ENCODE measurements at regions of chr19 and their contacts with region 1.

Region 1: DNA sequence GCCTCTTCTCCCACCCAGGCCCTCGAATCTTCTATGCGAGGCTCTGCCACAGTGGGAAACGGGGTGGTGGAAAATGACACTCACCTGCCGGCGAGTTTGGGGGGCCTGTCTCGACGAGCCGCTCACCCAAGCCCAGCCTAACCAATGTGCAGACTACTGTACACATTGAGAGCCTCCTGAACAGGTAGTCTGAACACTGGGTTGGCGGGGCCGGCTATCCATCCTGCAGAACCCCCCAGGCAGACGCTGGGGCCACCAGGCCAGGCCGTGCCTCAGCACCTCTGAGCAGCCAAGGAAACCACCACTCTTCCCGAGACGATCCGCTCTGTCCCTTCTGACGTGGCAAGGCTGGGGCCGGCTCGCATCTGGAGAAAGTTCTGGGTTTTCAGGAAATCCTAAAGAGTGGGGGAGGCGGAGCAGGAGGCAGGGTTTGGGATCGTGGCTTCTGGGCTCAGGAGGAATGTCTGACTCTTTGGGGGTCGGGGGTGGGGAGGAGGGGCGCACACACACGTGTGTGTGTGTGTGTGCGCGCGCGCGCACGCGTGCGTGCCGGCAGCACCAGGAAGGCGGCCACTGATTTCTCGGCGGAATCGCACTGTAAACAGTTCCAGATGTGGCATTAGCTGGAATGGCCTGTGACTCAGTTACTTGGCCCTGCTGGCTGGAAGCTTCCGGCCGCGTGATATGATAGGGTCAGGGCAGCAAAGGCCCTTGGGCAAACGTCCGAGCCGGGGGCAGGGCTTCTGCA is 18.5 kb downstream of the TMED1 start:
- DNase-seq: peak; percentile 51
- H3K4me3 ChIP-seq: peak overlapping the region in 3 of 4 donors; percentile 17 to 35 (median 21)
- H3K27ac ChIP-seq: peak overlapping the region; percentile 64 to 87 (median 78)
- H3K4me1 ChIP-seq: peaks cover 0 to 12% (median 2%) of the 10 kb centered on the region in 4 donors
- H3K27me3 ChIP-seq: no peaks in the 10 kb centered on the region
- CTCF ChIP-seq: no peak
- EP300 ChIP-seq: no peak
- POLR2A ChIP-seq: no peak

Region 2: GRCh38 chr19:10769533-10770491 is 47.7 kb before region 1 on chr19:
- in situ Hi-C with region 1: no loop called
- intact Hi-C with region 1: no loop called
- DNase-seq: peak; percentile 31
- H3K4me3 ChIP-seq: no peak overlapping the region
- H3K27ac ChIP-seq: peak overlapping the region; percentile 50 to 83 (median 72)
- H3K4me1 ChIP-seq: peaks cover 31 to 61% (median 49%) of the 10 kb centered on the region in 4 donors
- H3K27me3 ChIP-seq: no peaks in the 10 kb centered on the region
- CTCF ChIP-seq: peak; percentile 17 to 65 (median 30)
- EP300 ChIP-seq: no peak
- POLR2A ChIP-seq: no peak

Region 3: GRCh38 chr19:11242864-11243797 is 425.7 kb after region 1 on chr19:
- in situ Hi-C with region 1: no loop called
- intact Hi-C with region 1: loop called (anchors 5 kb)
- DNase-seq: peak; percentile 92
- H3K4me3 ChIP-seq: no peak overlapping the region
- H3K27ac ChIP-seq: peak overlapping the region in 2 of 4 donors; percentile 26 to 28
- H3K4me1 ChIP-seq: peaks cover 0 to 7% (median 6%) of the 10 kb centered on the region in 4 donors
- H3K27me3 ChIP-seq: no peaks in the 10 kb centered on the region
- CTCF ChIP-seq: peak; percentile 67 to 87 (median 73)
- EP300 ChIP-seq: no peak
- POLR2A ChIP-seq: no peak

Measured in transverse colon (tissue), 4 donors.